Kidney (tissue), 22 donors: ENCODE measurements at regions of chrX and their contacts with region 1.

Region 1: DNA sequence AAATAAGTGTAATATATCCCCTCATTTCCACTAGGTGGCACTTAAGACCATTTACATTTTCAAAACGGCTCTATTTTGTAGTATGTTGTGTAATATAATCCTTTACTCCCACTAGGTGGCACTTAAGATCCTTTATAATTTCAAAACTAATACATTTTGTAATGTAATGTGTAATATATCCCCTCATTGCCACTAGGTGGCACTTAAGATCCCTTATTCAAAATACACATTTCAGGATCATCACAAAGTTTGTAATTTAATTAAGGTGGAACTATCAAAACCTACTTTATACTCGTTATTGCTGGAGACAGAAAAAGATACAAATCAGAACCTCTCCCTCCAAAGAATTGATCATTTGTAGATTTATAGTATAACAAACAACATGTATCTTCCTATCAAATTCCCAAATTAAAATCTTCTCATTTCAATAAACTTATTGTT is 132.5 kb downstream of the ARHGAP6 start:
- DNase-seq: peak in 2 of 5 donors; percentile 81 to 85
- H3K4me3 ChIP-seq: no peak overlapping the region
- H3K27ac ChIP-seq: no peak overlapping the region
- H3K4me1 ChIP-seq: no peaks in the 10 kb centered on the region
- H3K27me3 ChIP-seq: peaks cover 4% of the 10 kb centered on the region
- CTCF ChIP-seq: peak; percentile 59

Region 2: DNA sequence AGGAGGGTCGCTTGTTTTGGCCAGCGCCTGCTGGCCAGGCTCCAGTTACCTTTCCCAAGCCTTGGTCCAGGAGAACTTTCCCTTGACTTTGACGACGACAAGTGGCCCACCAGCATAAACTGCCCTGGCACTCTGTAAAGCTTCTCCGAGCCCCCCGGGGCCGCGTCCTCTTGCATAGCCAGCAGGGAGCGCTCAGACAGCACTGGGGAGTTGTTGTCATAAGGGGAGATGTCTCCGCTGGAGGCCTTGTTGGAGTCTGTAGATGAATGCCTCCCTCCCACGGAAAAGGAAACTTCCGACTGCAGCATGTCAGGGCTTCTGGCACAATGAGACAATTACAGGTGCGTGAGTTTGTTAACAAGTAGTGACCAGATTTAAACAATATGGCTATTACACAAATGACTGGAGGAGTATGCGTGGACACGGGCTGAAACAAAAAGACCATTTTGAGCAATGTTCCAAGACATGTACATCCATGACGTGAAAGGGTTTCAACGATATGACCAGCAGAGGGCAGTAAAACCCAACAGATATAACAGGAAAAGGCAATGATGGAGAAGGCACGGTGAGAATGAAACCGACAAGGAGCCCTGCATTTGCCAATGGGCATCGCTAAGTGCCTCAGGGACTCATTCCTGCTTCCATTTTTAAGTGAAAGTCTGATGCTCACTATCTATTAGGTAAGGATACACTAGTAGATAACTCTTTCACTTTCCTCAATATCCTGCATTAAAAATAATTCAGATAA is 389.1 kb before region 1 on chrX:
- intact Hi-C with region 1: loop called (anchors 10 kb)
- DNase-seq: peak in 4 of 5 donors; percentile 58 to 89 (median 79)
- H3K4me3 ChIP-seq: no peak overlapping the region
- H3K27ac ChIP-seq: no peak overlapping the region
- H3K4me1 ChIP-seq: no peaks in the 10 kb centered on the region
- H3K27me3 ChIP-seq: no peaks in the 10 kb centered on the region
- CTCF ChIP-seq: peak; percentile 71

Region 3: DNA sequence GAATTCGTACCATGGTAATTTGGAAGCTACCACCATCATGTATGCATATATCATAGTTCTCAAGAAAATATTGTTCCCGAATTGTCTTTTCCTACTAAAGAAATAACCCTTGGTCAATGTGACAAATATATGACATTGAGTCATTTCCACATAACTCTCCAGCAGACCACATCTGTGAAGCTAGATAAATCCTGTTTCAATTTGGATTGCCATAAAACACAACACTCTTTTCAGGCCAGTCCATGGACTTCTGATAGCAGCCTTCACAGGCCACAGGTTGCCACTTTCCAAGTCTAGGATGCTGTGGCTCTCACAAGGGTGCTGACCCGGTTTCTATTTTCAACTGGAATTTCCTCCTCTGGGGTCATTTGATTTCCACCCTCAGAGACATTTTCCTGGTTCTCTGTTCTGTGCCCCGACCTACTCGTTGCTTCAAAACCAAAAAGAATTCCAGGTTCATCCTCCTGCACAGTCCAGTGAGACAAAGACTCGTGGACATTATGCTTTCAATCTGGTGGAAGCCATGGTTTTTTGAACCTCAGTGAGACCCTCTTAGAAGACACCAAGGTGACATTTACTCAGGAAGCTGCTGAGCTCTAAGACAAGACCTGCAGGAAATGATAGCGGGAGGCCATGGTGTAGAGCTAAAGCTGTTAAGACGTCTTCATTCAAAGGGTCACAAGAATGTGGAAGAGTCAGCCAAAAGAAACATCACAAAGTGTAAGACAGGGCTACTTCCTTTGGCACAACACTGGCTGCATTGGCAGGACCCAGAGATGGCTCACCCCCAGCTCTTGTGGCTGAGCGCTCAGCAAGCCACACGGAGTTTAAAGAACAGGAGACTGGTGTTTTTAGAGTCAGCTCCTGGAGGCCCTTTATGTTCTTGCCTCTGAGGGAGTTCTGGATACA is 120.3 kb before region 1 on chrX:
- intact Hi-C with region 1: no loop called
- DNase-seq: peak in 1 of 5 donors; percentile 44
- H3K4me3 ChIP-seq: no peak overlapping the region
- H3K27ac ChIP-seq: no peak overlapping the region
- H3K4me1 ChIP-seq: peaks cover 0 to 3% (median 0%) of the 10 kb centered on the region in 3 donors
- H3K27me3 ChIP-seq: no peaks in the 10 kb centered on the region
- CTCF ChIP-seq: no peak

Region 4: GRCh38 chrX:11611965-11612364 is 78.7 kb after region 1 on chrX:
- intact Hi-C with region 1: no loop called
- DNase-seq: no peak
- H3K4me3 ChIP-seq: no peak overlapping the region
- H3K27ac ChIP-seq: no peak overlapping the region
- H3K4me1 ChIP-seq: no peaks in the 10 kb centered on the region
- H3K27me3 ChIP-seq: no peaks in the 10 kb centered on the region
- CTCF ChIP-seq: no peak

Region 5: GRCh38 chrX:11724122-11725017 is 191.1 kb after region 1 on chrX:
- intact Hi-C with region 1: loop called (anchors 10 kb)
- DNase-seq: peak in 3 of 5 donors; percentile 27 to 58 (median 27)
- H3K4me3 ChIP-seq: no peak overlapping the region
- H3K27ac ChIP-seq: no peak overlapping the region
- H3K4me1 ChIP-seq: no peaks in the 10 kb centered on the region
- H3K27me3 ChIP-seq: no peaks in the 10 kb centered on the region
- CTCF ChIP-seq: peak; percentile 65

Region 6: DNA sequence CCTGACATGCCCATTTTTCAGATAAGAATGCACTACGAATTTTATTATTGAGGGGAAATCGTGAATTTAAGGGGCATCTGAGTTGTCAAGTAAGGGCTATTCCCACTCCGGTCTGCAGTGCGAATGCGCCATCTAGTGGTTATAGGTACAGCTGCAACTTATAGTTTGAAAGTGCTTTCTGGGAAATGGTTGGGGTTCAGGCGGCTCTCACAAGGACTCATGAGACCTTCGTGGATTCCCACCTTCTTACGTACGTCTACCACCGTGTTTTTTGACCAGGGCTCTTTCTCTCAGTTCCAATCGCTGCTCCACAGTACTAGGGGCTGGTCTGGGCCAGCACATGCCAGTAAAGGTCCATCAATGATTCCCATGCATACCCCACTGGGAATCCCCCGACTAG is 237.1 kb after region 1 on chrX:
- intact Hi-C with region 1: no loop called
- DNase-seq: peak in 4 of 5 donors; percentile 34 to 69 (median 49)
- H3K4me3 ChIP-seq: no peak overlapping the region
- H3K27ac ChIP-seq: no peak overlapping the region
- H3K4me1 ChIP-seq: no peaks in the 10 kb centered on the region
- H3K27me3 ChIP-seq: no peaks in the 10 kb centered on the region
- CTCF ChIP-seq: peak; percentile 72